ENCODE measurements at regions of chr17 and their contacts with region 1.

Region 1: DNA sequence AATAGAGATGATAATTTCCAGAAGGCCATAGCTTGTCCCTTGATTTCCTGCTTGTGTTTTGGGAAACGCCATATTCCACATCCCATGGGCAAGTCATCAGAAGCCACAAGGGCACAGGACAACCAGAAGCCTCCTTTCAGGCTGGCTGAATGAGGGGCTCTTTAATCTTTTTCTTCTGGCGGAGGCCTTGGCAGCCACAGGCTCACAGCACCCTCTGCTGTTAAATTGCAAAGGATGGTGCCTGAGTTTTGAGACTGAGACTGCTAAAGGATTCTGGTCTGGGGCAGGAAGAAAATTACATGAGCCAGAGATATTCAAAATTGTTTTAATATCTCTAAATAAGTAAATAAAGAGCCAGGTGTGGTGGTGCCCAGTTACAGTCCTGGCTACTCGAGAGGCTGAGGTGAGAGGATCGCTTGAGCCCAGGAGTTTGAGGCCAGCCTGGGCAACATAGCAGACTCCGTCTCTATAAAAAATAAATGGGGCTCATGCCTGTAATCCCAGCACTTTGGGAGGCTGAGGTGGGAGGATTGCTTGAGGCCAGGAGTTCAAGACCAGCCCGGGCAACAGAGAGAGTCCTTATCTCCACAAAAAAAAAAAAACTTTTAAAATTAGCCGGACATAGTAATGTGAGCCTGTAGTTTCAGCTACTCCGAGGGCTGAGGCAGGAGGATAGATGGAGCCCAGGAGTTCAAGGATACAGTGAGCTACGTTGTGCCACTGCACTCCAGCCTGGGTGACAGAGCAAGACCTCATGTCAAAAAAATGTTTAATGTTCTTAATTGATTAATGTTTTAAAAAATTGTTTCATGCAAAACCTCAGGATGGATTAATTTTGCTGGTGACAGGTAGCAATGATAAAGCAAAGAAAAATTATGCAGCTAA is 26.3 kb downstream of the AARSD1 start:
- DNase-seq: peak; percentile 73
- H3K4me3 Mint-ChIP-seq: no peak overlapping the region
- H3K27ac Mint-ChIP-seq: no peak overlapping the region
- H3K4me1 Mint-ChIP-seq: no peaks in the 10 kb centered on the region
- H3K27me3 Mint-ChIP-seq: peaks cover 11% of the 10 kb centered on the region

Region 2: GRCh38 chr17:42598905-42599304 is 339.0 kb before region 1 on chr17:
- intact Hi-C with region 1: no loop called
- DNase-seq: no peak
- H3K4me3 Mint-ChIP-seq: no peak overlapping the region
- H3K27ac Mint-ChIP-seq: no peak overlapping the region
- H3K4me1 Mint-ChIP-seq: peaks cover 3% of the 10 kb centered on the region
- H3K27me3 Mint-ChIP-seq: no peaks in the 10 kb centered on the region

Region 3: DNA sequence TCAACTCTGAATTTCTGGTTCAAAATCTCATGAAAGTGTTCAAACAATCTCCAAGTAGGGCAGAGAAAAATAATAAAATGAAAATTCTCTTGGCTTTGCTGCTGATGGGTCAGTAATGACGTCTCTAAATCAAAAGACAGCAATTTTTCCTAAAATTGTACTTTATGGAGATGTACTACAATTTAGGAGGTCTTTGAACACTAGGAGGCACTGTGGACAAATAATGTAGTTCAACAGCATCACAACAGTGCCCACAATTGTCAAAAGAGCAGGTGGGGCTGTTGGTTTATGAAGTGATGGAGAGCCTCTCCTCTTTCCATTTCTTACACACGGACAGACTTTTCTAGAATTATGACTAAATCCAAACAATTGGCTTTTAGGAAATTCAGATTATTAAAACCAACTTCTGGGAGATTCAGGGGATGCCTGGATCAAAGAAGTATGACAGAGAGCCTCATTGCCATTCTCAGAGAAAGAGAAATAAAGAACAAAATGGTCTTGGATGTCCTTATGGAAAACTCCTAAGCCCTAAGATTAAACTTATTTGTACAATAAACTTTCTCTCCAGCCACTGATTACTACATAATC is 216.9 kb before region 1 on chr17:
- intact Hi-C with region 1: loop called (anchors 10 kb)
- DNase-seq: peak; percentile 82
- H3K4me3 Mint-ChIP-seq: no peak overlapping the region
- H3K27ac Mint-ChIP-seq: no peak overlapping the region
- H3K4me1 Mint-ChIP-seq: no peaks in the 10 kb centered on the region
- H3K27me3 Mint-ChIP-seq: no peaks in the 10 kb centered on the region

Region 4: GRCh38 chr17:42985225-42985624 is 47.3 kb after region 1 on chr17:
- intact Hi-C with region 1: no loop called
- DNase-seq: no peak
- H3K4me3 Mint-ChIP-seq: no peak overlapping the region
- H3K27ac Mint-ChIP-seq: peak overlapping the region; percentile 41
- H3K4me1 Mint-ChIP-seq: peaks cover 20% of the 10 kb centered on the region
- H3K27me3 Mint-ChIP-seq: no peaks in the 10 kb centered on the region